Activated B cell treated with CpG ODN at 0.5 μM for 24 hours (primary cell): ENCODE measurements at regions of chr17 and their contacts with region 1.

Region 1: DNA sequence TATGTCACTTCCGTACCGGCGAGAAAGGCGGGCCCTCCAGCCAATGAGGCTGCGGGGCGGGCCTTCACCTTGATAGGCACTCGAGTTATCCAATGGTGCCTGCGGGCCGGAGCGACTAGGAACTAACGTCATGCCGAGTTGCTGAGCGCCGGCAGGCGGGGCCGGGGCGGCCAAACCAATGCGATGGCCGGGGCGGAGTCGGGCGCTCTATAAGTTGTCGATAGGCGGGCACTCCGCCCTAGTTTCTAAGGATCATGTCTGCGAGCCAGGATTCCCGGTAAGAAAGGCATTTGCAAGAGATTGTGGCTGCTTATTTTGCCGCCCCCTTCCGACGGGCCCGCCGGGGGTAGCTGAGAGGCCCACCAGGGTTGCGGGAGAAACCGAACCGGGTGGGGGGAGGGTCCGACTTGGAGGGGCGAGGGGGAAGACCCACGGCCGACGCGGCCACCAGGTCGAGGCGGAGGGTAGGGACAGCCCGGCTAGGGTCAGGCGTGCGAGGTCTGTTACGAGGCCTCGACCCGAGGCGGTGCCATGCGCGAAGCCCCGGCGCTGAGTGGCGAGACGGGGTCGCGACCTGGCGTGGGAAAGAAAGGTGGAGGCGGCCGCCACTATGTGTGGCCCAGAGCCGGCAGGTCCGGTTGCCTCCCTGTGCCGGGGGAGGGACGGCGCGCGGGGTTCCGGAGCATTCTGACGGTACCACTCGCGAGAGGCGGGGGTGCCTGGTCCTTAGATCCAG is 6.7 kb upstream of the CD68 start:
- DNase-seq: peak; percentile 100
- ATAC-seq: no peak
- H3K4me3 Mint-ChIP-seq: peak overlapping the region; percentile 98
- H3K27ac Mint-ChIP-seq: peak overlapping the region; percentile 99
- H3K4me1 Mint-ChIP-seq: peaks cover 48% of the 10 kb centered on the region
- H3K27me3 Mint-ChIP-seq: no peaks in the 10 kb centered on the region
- CTCF ChIP-seq: no peak

Region 2: DNA sequence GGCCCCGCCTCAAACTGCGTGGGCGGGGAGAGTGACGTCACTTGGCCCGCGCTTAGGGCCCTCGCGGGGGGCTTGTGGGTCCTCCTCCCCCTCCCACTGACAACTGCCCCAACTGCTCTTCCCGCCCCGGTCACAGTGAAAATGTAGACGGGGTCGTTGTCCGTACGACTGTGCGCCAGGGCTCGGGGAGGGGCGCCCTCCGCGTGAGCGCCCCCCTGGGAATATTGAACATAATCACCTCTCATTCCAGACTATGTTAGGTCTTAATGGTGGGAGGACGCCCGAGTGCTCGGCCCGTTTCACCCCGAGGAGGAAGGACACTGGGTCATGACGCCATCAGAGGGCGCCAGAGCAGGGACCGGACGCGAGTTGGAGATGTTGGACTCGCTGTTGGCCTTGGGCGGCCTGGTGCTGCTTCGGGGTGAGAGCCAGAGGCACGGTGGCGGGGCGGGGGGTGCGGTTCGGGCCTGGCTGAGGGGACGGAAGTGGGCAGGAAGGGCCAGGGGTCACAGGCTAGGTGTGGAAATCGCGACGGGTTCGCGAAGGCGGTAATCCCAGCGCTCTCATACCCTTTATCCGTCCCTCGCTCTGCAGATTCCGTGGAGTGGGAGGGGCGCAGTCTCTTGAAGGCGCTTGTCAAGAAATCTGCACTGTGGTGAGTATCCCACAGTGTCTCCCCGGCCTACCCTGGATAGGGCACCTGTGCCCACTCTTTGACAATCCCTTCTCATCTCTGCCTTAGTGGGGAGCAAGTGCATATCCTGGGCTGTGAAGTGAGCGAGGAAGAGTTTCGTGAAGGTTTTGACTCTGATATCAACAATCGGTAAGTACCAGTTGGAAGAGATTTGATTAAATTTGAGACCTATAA is 320.3 kb before region 1 on chr17 and contains the start of gene ELP5:
- CTCF ChIA-PET with region 1: no interaction called
- POLR2A ChIA-PET with region 1: interaction called, 7 read pairs
- intact Hi-C with region 1: loop called (anchors 1 kb)
- DNase-seq: no peak
- ATAC-seq: peak; percentile 61
- H3K4me3 Mint-ChIP-seq: peak within 1 kb of the TSS; percentile 98
- H3K27ac Mint-ChIP-seq: peak within 1 kb of the TSS; percentile 100
- H3K4me1 Mint-ChIP-seq: peaks cover 44% of the 10 kb centered on the region
- H3K27me3 Mint-ChIP-seq: no peaks in the 10 kb centered on the region
- CTCF ChIP-seq: no peak
- total RNA-seq, gene ELP5: 49.2 and 53.6 TPM in 2 replicates

Region 3: GRCh38 chr17:7508190-7508589 is 64.6 kb before region 1 on chr17:
- CTCF ChIA-PET with region 1: no interaction called
- POLR2A ChIA-PET with region 1: no interaction called
- intact Hi-C with region 1: no loop called
- DNase-seq: no peak
- ATAC-seq: no peak
- H3K4me3 Mint-ChIP-seq: no peak overlapping the region
- H3K27ac Mint-ChIP-seq: no peak overlapping the region
- H3K4me1 Mint-ChIP-seq: no peaks in the 10 kb centered on the region
- H3K27me3 Mint-ChIP-seq: no peaks in the 10 kb centered on the region
- CTCF ChIP-seq: no peak

Region 4: GRCh38 chr17:7548585-7549400 is 24.0 kb before region 1 on chr17 and contains the start of gene TNFSF12:
- CTCF ChIA-PET with region 1: no interaction called
- POLR2A ChIA-PET with region 1: interaction called, 24 read pairs
- intact Hi-C with region 1: no loop called
- DNase-seq: peak; percentile 55
- ATAC-seq: peak; percentile 58
- H3K4me3 Mint-ChIP-seq: peak within 1 kb of the TSS; percentile 82
- H3K27ac Mint-ChIP-seq: peak within 1 kb of the TSS; percentile 90
- H3K4me1 Mint-ChIP-seq: peaks cover 52% of the 10 kb centered on the region
- H3K27me3 Mint-ChIP-seq: no peaks in the 10 kb centered on the region
- CTCF ChIP-seq: no peak
- total RNA-seq, gene TNFSF12: 25.2 and 30.7 TPM in 2 replicates

Region 5: GRCh38 chr17:7583253-7584109 is 10.7 kb after region 1 on chr17 and contains the start of gene MPDU1:
- CTCF ChIA-PET with region 1: no interaction called
- POLR2A ChIA-PET with region 1: interaction called, 131 read pairs
- intact Hi-C with region 1: loop called (anchors 1 kb)
- DNase-seq: peak; percentile 90
- ATAC-seq: peak; percentile 76
- H3K4me3 Mint-ChIP-seq: peak within 1 kb of the TSS; percentile 100
- H3K27ac Mint-ChIP-seq: peak within 1 kb of the TSS; percentile 100
- H3K4me1 Mint-ChIP-seq: peaks cover 64% of the 10 kb centered on the region
- H3K27me3 Mint-ChIP-seq: no peaks in the 10 kb centered on the region
- CTCF ChIP-seq: no peak
- total RNA-seq, gene MPDU1: 50.7 and 58.9 TPM in 2 replicates

Region 6: GRCh38 chr17:7614422-7615264 is 41.9 kb after region 1 on chr17 and contains the start of gene FXR2:
- CTCF ChIA-PET with region 1: no interaction called
- POLR2A ChIA-PET with region 1: interaction called, 10 read pairs
- intact Hi-C with region 1: loop called (anchors 1 kb)
- DNase-seq: peak; percentile 97
- ATAC-seq: peak; percentile 93
- H3K4me3 Mint-ChIP-seq: peak within 1 kb of the TSS; percentile 87
- H3K27ac Mint-ChIP-seq: peak within 1 kb of the TSS; percentile 93
- H3K4me1 Mint-ChIP-seq: peaks cover 37% of the 10 kb centered on the region
- H3K27me3 Mint-ChIP-seq: no peaks in the 10 kb centered on the region
- CTCF ChIP-seq: no peak
- total RNA-seq, gene FXR2: 27.5 and 32.4 TPM in 2 replicates